ENCODE measurements at regions of chr2 and their contacts with region 1.

Region 1: GRCh38 chr2:189412330-189412953 is 28.8 kb upstream of the WDR75 start:
- DNase-seq: peak in 8 of 9 donors; percentile 18 to 64 (median 51)
- ATAC-seq: peak; percentile 67
- H3K4me3 ChIP-seq: no peak overlapping the region
- H3K4me3 Mint-ChIP-seq: no peak overlapping the region
- H3K27ac ChIP-seq: no peak overlapping the region
- H3K27ac Mint-ChIP-seq: no peak overlapping the region
- H3K4me1 ChIP-seq: peaks cover 0 to 7% of the 10 kb centered on the region in 2 donors
- H3K4me1 Mint-ChIP-seq: peaks cover 4 to 12% (median 9%) of the 10 kb centered on the region in 7 donors
- H3K27me3 ChIP-seq: no peaks in the 10 kb centered on the region
- H3K27me3 Mint-ChIP-seq: no peaks in the 10 kb centered on the region

Region 2: GRCh38 chr2:188524519-188525113 is 887.8 kb before region 1 on chr2:
- CTCF ChIA-PET with region 1: no interaction called
- POLR2A ChIA-PET with region 1: no interaction called
- intact Hi-C with region 1: loop called (anchors 1 kb)
- DNase-seq: peak in 6 of 9 donors; percentile 4 to 40 (median 27)
- ATAC-seq: peak; percentile 61
- H3K4me3 ChIP-seq: no peak overlapping the region
- H3K4me3 Mint-ChIP-seq: no peak overlapping the region
- H3K27ac ChIP-seq: no peak overlapping the region
- H3K27ac Mint-ChIP-seq: no peak overlapping the region
- H3K4me1 ChIP-seq: no peaks in the 10 kb centered on the region
- H3K4me1 Mint-ChIP-seq: no peaks in the 10 kb centered on the region
- H3K27me3 ChIP-seq: no peaks in the 10 kb centered on the region
- H3K27me3 Mint-ChIP-seq: peaks cover 0 to 5% (median 2%) of the 10 kb centered on the region in 5 donors

Region 3: GRCh38 chr2:189096769-189097447 is 315.5 kb before region 1 on chr2:
- CTCF ChIA-PET with region 1: interaction called, 13 read pairs
- POLR2A ChIA-PET with region 1: interaction called, 4 read pairs
- intact Hi-C with region 1: loop called (anchors 1 kb)
- DNase-seq: no peak
- ATAC-seq: no peak
- H3K4me3 ChIP-seq: no peak overlapping the region
- H3K4me3 Mint-ChIP-seq: no peak overlapping the region
- H3K27ac ChIP-seq: no peak overlapping the region
- H3K27ac Mint-ChIP-seq: no peak overlapping the region
- H3K4me1 ChIP-seq: no peaks in the 10 kb centered on the region
- H3K4me1 Mint-ChIP-seq: peaks cover 0 to 5% (median 0%) of the 10 kb centered on the region in 7 donors
- H3K27me3 ChIP-seq: no peaks in the 10 kb centered on the region
- H3K27me3 Mint-ChIP-seq: no peaks in the 10 kb centered on the region

Region 4: GRCh38 chr2:189142893-189143759 is 269.3 kb before region 1 on chr2:
- CTCF ChIA-PET with region 1: interaction called, 8 read pairs
- POLR2A ChIA-PET with region 1: no interaction called
- intact Hi-C with region 1: loop called (anchors 1 kb)
- DNase-seq: peak in 8 of 9 donors; percentile 35 to 68 (median 56)
- ATAC-seq: peak; percentile 88
- H3K4me3 ChIP-seq: no peak overlapping the region
- H3K4me3 Mint-ChIP-seq: no peak overlapping the region
- H3K27ac ChIP-seq: no peak overlapping the region
- H3K27ac Mint-ChIP-seq: peak overlapping the region in 1 of 9 donors; percentile 10
- H3K4me1 ChIP-seq: no peaks in the 10 kb centered on the region
- H3K4me1 Mint-ChIP-seq: peaks cover 0 to 6% (median 0%) of the 10 kb centered on the region in 7 donors
- H3K27me3 ChIP-seq: no peaks in the 10 kb centered on the region
- H3K27me3 Mint-ChIP-seq: no peaks in the 10 kb centered on the region

Region 5: DNA sequence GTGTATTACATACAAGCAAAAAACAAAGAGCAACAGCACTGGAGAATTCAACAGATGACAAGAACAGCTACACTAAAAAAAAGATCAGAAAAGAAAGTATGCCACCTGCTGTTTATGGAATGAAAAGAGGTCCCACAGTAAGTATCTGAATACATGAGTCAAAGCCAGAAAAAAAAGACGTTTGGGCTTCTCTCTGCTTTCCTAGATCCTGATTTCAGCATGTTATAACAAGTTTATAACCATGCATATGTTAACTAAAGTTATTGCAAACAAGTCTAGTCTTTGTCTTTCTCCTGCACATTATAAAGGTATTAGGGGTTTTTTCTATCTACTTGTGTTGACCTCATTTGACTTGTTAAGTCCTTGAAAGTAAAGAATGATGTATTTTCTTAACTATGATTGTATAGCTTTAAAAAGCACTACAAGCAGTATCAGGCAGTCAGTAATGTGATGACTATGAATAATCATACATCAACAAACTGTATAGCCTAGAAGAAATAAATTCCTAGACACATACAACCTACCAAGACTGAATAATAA is 124.4 kb before region 1 on chr2:
- CTCF ChIA-PET with region 1: no interaction called
- POLR2A ChIA-PET with region 1: no interaction called
- intact Hi-C with region 1: loop called (anchors 2 to 5 kb)
- DNase-seq: peak in 5 of 9 donors; percentile 16 to 45 (median 34)
- ATAC-seq: peak; percentile 40
- H3K4me3 ChIP-seq: no peak overlapping the region
- H3K4me3 Mint-ChIP-seq: no peak overlapping the region
- H3K27ac ChIP-seq: no peak overlapping the region
- H3K27ac Mint-ChIP-seq: peak overlapping the region in 4 of 9 donors; percentile 1 to 13 (median 8)
- H3K4me1 ChIP-seq: no peaks in the 10 kb centered on the region
- H3K4me1 Mint-ChIP-seq: peaks cover 5 to 28% (median 16%) of the 10 kb centered on the region in 7 donors
- H3K27me3 ChIP-seq: no peaks in the 10 kb centered on the region
- H3K27me3 Mint-ChIP-seq: no peaks in the 10 kb centered on the region

Region 6: DNA sequence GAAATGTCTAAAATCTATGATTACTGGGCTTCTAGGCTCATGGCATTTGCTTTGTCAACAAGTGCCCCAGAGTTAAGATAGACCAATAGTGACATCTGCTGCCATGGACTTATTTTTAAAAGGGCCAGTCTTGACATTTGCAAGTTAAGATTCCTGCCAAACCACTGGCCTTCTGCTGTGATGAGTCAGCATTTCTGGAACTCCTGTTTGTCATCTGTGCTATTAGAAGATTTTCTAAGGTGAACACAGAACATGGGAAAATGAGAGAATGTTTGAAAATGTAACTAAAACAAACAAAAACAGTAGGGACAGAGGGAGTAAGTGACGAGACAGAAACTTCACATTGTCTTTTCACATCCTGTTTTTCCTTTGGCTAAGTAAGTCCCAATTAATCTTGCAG is 64.9 kb before region 1 on chr2:
- CTCF ChIA-PET with region 1: interaction called, 3 read pairs
- POLR2A ChIA-PET with region 1: no interaction called
- intact Hi-C with region 1: loop called in 1 of 2 experiments (anchors 2 kb)
- DNase-seq: peak in 7 of 9 donors; percentile 14 to 58 (median 47)
- ATAC-seq: peak; percentile 52
- H3K4me3 ChIP-seq: no peak overlapping the region
- H3K4me3 Mint-ChIP-seq: no peak overlapping the region
- H3K27ac ChIP-seq: no peak overlapping the region
- H3K27ac Mint-ChIP-seq: peak overlapping the region in 1 of 9 donors; percentile 62
- H3K4me1 ChIP-seq: peaks cover 0 to 7% of the 10 kb centered on the region in 2 donors
- H3K4me1 Mint-ChIP-seq: peaks cover 7 to 22% (median 18%) of the 10 kb centered on the region in 7 donors
- H3K27me3 ChIP-seq: no peaks in the 10 kb centered on the region
- H3K27me3 Mint-ChIP-seq: no peaks in the 10 kb centered on the region

Measured in naive thymus-derived CD4-positive, alpha-beta T cell (primary cell).